AG04450 (cell line): ENCODE measurements at regions of chr2 and their contacts with region 1.

Region 1: GRCh38 chr2:20071397-20072383 is 20.3 kb upstream of the LAPTM4A start:
- DNase-seq: peak; percentile 97
- H3K4me3 ChIP-seq: peak overlapping the region; percentile 36
- H3K27ac ChIP-seq: peak overlapping the region; percentile 100
- H3K27me3 ChIP-seq: no peaks in the 10 kb centered on the region
- CTCF ChIP-seq: no peak

Region 2: DNA sequence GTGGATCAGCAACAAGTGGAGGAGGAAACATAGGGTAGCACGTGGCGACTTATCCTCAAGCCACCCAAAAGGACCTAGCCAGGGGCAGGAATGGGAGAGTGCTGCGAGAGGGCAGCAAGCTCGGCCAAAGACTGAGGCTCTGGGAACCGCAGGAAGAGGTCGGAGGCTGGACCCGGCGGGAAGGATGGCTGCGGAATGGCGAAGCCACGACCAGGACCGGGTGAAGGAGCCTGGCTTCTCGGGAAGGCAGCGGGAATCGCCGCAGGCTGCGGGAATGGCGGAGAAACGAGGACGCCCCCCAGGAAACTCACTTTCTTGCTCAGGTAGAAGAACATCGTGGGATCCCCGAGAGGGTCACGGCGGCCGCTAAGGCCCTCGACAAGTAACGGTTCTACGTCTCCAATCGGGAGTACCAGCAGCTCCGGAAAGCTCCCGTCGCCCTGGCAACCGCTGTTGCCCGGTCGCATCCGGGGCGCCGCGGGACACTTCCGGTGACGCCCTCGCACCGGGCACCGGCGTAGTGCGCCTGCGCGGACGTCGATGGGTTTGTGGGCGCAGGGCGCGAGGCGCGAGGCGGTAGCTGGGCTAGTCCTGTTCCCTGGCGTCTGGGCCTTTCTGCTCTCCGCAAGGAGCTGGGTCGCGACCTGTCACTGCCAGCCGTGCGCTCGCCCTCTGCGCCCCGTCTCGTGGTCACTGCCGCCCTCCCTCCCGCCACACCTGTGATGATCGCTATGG is 81.8 kb before region 1 on chr2 and contains the start of gene WDR35:
- CTCF ChIA-PET with region 1: interaction called, 10 read pairs
- POLR2A ChIA-PET with region 1: no interaction called
- DNase-seq: peak; percentile 61
- H3K4me3 ChIP-seq: peak within 1 kb of the TSS; percentile 89
- H3K27ac ChIP-seq: peak within 1 kb of the TSS; percentile 69
- H3K27me3 ChIP-seq: no peaks in the 10 kb centered on the region
- CTCF ChIP-seq: no peak
- polyA plus RNA-seq, gene WDR35: 6.7 and 9.1 TPM in 2 replicates

Region 3: GRCh38 chr2:20008703-20009102 is 63.0 kb before region 1 on chr2:
- CTCF ChIA-PET with region 1: no interaction called
- POLR2A ChIA-PET with region 1: no interaction called
- DNase-seq: no peak
- H3K4me3 ChIP-seq: no peak overlapping the region
- H3K27ac ChIP-seq: no peak overlapping the region
- H3K27me3 ChIP-seq: no peaks in the 10 kb centered on the region
- CTCF ChIP-seq: no peak

Region 4: DNA sequence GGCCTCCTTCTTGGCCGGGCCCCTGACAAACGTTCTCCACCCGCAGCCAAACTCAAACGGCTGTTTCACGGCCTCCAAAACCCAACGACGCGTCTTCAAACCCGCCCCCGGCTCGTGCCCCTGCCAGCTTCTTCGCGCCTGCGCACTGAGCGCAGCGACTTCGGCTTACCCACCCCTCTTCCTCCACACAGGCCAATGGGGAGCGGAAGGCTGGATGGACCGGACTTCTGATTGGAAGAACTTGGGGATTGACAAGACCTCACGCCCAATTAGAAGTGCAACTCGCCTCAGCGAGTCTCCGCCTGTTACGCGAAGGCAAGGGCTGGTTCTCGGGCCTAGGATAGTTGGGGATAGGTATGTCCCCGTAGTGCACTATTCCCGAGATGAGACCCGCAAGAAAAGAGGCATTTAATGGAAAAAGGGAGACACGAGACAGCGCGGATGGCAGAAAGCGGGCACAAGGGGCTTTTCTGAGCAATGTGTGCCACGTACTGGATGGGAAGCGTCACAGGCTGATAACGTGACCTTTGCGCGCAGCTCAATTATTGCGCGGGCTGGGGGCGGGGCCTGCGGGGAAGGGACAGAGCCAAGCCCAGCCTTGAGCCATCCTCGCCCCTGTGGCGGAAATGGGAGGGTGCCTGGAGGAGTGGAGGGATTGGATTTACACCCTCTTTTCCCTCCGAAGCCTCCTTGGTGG is 20.0 kb before region 1 on chr2 and contains the start of gene LAPTM4A:
- CTCF ChIA-PET with region 1: no interaction called
- POLR2A ChIA-PET with region 1: interaction called, 44 read pairs
- DNase-seq: peak; percentile 100
- H3K4me3 ChIP-seq: peak within 1 kb of the TSS; percentile 97
- H3K27ac ChIP-seq: peak within 1 kb of the TSS; percentile 100
- H3K27me3 ChIP-seq: no peaks in the 10 kb centered on the region
- CTCF ChIP-seq: 0 out of 2 replicates have a peak, but pooled peaks have one; percentile 10
- polyA plus RNA-seq, gene LAPTM4A: 1,309 and 1,416 TPM in 2 replicates

Region 5: DNA sequence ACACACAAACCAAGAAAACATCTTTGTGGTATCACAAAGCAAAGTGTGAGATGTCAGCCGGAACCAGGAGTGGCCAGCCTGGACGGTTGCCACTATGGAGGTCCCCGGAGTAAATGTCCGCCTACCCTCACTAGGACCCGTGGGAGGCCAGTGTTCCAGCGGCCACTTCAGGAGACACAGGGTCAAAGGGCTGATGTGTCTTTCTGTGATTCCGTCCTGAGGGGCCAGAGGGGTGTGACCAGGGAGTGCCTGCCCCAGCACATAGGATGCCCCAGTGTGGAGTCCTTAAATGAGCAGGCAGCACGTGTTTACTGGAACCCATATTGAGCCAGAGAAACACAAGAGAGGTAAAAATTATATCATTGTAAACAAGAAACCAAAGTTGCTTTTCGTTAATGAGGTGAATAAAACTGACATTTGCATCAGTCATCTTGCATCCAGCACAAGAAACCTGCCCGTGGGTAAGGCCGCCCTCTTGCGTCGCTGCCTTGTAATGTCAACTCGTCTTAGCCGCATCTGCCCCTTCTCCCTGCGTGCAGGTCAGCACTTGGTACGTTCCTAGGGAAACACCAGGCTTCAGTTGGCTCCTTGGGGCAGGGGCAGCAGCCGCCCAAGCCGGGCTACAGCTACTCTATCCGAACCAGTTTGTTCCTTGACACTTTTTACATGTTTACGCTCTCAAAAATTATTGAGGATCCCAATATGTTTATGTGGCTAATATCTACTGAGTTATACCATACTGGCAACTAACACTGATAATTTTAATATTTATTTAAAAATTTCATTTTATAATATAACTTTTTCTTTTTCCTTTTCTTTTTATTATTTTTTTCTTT is 26.4 kb after region 1 on chr2:
- CTCF ChIA-PET with region 1: interaction called, 3 read pairs
- POLR2A ChIA-PET with region 1: interaction called, 20 read pairs
- DNase-seq: peak; percentile 82
- H3K4me3 ChIP-seq: no peak overlapping the region
- H3K27ac ChIP-seq: no peak overlapping the region
- H3K27me3 ChIP-seq: no peaks in the 10 kb centered on the region
- CTCF ChIP-seq: peak; percentile 90

Region 6: GRCh38 chr2:20130821-20131645 is 59.3 kb after region 1 on chr2:
- CTCF ChIA-PET with region 1: no interaction called
- POLR2A ChIA-PET with region 1: no interaction called
- DNase-seq: no peak
- H3K4me3 ChIP-seq: no peak overlapping the region
- H3K27ac ChIP-seq: no peak overlapping the region
- H3K27me3 ChIP-seq: peaks cover 8% of the 10 kb centered on the region
- CTCF ChIP-seq: no peak

Region 7: GRCh38 chr2:20507166-20507692 is 435.5 kb after region 1 on chr2:
- CTCF ChIA-PET with region 1: no interaction called
- POLR2A ChIA-PET with region 1: no interaction called
- DNase-seq: no peak
- H3K4me3 ChIP-seq: no peak overlapping the region
- H3K27ac ChIP-seq: no peak overlapping the region
- H3K27me3 ChIP-seq: no peaks in the 10 kb centered on the region
- CTCF ChIP-seq: no peak